Activated CD4-positive, alpha-beta T cell treated with anti-CD3 and anti-CD28 coated beads, Interleukin-2, amount 10 ng/mL, durations not matched to agents 7 days and 5 days (primary cell): ENCODE measurements at regions of chr17 and their contacts with region 1.

Region 1: DNA sequence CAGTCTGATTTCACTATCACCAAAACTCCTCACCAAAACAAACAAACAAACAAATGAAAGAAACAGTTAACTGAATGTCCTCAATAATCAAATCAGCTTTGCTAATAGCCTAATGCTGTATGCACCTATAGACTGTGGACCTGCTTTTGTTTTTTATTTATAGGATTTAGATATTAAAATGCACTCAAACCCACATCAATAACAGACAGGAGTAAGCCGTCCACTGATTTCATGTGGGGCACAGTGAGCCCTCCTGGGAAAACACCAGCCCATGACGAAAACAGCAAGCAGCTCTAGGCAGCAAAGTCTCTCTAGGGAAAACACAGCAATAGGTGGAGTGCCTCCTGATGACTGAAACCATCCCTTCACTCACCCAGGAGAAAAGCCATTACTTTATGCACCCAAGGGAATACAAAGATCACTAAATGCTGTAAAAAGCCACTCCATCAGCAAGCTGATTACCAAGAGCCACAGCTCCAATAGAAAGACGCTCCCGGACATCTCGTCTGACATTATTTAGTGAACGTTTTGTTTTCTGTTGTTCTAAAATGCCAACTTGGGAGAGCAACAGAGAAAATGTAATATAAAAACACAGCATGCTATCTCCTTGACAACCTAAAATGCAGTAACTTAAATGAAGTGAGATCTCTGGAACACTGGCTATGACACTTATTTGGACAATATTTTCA is 47.8 kb downstream of the ANKFY1 start:
- DNase-seq: no peak
- H3K4me3 Mint-ChIP-seq: no peak overlapping the region
- H3K27ac Mint-ChIP-seq: peak overlapping the region; percentile 48
- H3K4me1 Mint-ChIP-seq: peaks cover 11% of the 10 kb centered on the region
- H3K27me3 Mint-ChIP-seq: no peaks in the 10 kb centered on the region

Region 2: DNA sequence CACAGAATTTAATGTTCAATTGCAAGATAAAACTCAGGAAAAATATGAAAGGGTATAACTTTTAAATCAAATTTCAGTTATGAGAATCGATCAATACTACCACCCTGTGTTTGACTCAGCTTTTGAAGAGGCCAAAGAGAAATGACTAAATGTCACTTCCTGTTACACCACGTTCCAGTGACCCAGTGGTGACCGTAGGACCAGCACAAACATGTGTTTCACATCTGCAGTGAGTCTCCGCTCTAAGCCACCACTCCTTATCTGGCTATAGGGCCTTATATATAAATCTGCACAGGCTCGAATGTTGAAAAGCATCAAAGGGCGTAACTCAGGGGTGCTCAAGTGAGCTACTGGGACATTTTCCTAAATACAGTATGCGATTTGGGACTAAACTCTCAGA is 37.0 kb before region 1 on chr17:
- CTCF ChIA-PET with region 1: no interaction called
- POLR2A ChIA-PET with region 1: no interaction called
- DNase-seq: no peak
- H3K4me3 Mint-ChIP-seq: no peak overlapping the region
- H3K27ac Mint-ChIP-seq: no peak overlapping the region
- H3K4me1 Mint-ChIP-seq: peaks cover 50% of the 10 kb centered on the region
- H3K27me3 Mint-ChIP-seq: no peaks in the 10 kb centered on the region

Region 3: GRCh38 chr17:4263282-4264215 is 47.5 kb after region 1 on chr17 and contains the start of gene ANKFY1:
- CTCF ChIA-PET with region 1: no interaction called
- POLR2A ChIA-PET with region 1: no interaction called
- DNase-seq: peak; percentile 98
- H3K4me3 Mint-ChIP-seq: peak within 1 kb of the TSS; percentile 91
- H3K27ac Mint-ChIP-seq: peak within 1 kb of the TSS; percentile 90
- H3K4me1 Mint-ChIP-seq: peaks cover 31% of the 10 kb centered on the region
- H3K27me3 Mint-ChIP-seq: no peaks in the 10 kb centered on the region
- total RNA-seq, gene ANKFY1: 79.1 to 87.5 TPM

Region 4: GRCh38 chr17:4412933-4413831 is 197.2 kb after region 1 on chr17:
- CTCF ChIA-PET with region 1: interaction called, 14 read pairs
- POLR2A ChIA-PET with region 1: no interaction called
- DNase-seq: peak; percentile 93
- H3K4me3 Mint-ChIP-seq: peak overlapping the region; percentile 44
- H3K27ac Mint-ChIP-seq: peak overlapping the region; percentile 71
- H3K4me1 Mint-ChIP-seq: peaks cover 6% of the 10 kb centered on the region
- H3K27me3 Mint-ChIP-seq: no peaks in the 10 kb centered on the region